ENCODE measurements at regions of chr17 and their contacts with region 1.

Region 1: DNA sequence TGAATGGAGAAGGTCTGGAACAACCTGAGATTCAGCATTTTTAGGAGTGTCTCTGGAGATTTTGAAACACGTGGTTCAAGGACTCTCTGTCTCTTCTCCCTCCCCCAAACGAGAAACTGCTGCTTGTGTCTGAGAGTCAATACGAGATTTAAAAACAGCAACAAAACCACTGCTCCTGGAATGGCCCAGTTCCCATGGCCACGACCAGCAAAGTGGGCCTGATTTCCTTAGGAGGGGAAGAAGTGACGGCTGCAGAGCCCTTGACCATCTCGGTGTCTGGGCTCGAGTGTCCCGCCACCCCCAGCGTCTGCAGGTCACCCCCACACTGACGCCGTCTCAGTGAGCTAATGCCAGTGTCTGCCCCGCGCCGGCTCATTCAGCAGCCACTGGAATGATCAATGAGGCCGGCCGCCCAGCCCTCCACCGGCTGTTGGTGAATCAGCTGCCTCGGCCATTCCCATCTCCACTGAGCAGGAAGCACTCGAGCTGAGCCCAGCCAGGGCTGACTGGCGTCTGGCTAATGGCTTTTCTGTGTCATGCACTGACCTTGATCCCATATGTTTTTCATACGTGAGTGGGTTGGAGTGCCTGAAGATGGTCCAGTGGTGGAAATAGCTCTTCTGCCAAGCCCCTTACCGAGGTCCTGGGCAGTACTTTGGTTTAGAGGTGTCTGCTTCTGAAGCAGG is 151.8 kb downstream of the PITPNC1 start:
- DNase-seq: peak; percentile 82
- H3K4me3 Mint-ChIP-seq: peak overlapping the region; percentile 62
- H3K27ac Mint-ChIP-seq: peak overlapping the region; percentile 54
- H3K4me1 Mint-ChIP-seq: peaks cover 13% of the 10 kb centered on the region
- H3K27me3 Mint-ChIP-seq: no peaks in the 10 kb centered on the region
- CTCF ChIP-seq: no peak

Region 2: DNA sequence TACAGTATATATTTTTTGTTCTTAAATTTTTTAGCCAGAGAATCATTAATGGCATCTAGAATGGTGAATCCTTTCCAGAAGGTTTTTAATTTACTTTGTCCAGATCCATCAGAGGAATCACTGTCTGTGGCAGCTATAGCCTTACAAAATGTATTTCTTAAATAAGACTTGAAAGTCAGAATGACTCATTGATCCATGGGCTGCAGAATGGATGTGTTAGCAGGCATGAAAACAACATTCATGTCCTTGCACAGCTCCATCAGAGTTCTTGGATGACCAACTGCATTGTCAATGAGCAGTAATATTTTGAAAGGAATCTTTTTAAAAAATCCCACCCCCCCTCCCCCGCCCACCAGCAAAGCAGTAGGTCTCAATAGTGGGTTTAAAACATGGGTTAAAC is 433.1 kb before region 1 on chr17:
- CTCF ChIA-PET with region 1: no interaction called
- intact Hi-C with region 1: no loop called
- DNase-seq: no peak
- H3K4me3 Mint-ChIP-seq: no peak overlapping the region
- H3K27ac Mint-ChIP-seq: no peak overlapping the region
- H3K4me1 Mint-ChIP-seq: peaks cover 25% of the 10 kb centered on the region
- H3K27me3 Mint-ChIP-seq: no peaks in the 10 kb centered on the region
- CTCF ChIP-seq: no peak

Region 3: DNA sequence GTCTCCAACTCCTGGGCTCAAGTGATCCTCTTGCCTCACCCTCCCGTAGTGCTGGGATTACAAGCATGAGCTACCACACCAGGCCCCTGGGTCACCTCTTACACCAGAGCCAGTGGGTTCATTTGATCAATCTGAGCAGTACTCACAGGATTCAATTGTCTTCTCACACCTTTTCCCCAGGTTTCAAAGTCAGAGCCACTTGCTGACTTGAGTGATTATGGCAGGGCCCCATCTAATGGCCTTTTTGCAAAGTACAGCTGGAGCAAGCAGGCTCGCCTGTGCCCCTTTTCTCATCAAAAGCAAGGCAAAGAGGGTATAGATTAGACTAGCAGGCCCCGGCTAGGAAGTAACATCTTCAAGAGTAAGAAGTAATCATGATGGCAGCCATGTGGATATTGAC is 74.1 kb after region 1 on chr17:
- CTCF ChIA-PET with region 1: no interaction called
- intact Hi-C with region 1: loop called (anchors 10 kb)
- DNase-seq: peak; percentile 57
- H3K4me3 Mint-ChIP-seq: no peak overlapping the region
- H3K27ac Mint-ChIP-seq: no peak overlapping the region
- H3K4me1 Mint-ChIP-seq: peaks cover 28% of the 10 kb centered on the region
- H3K27me3 Mint-ChIP-seq: no peaks in the 10 kb centered on the region
- CTCF ChIP-seq: peak; percentile 32

Measured in Calu3 (cell line).